ENCODE measurements at regions of chr1 and their contacts with region 1.

Region 1: GRCh38 chr1:100459358-100460114 is 78.4 kb upstream of the GPR88 start:
- DNase-seq: peak; percentile 69
- H3K4me3 ChIP-seq: no peak overlapping the region
- H3K27ac ChIP-seq: no peak overlapping the region
- H3K4me1 ChIP-seq: peaks cover 7% of the 10 kb centered on the region
- H3K27me3 ChIP-seq: no peaks in the 10 kb centered on the region
- CTCF ChIP-seq: peak; percentile 93

Region 2: DNA sequence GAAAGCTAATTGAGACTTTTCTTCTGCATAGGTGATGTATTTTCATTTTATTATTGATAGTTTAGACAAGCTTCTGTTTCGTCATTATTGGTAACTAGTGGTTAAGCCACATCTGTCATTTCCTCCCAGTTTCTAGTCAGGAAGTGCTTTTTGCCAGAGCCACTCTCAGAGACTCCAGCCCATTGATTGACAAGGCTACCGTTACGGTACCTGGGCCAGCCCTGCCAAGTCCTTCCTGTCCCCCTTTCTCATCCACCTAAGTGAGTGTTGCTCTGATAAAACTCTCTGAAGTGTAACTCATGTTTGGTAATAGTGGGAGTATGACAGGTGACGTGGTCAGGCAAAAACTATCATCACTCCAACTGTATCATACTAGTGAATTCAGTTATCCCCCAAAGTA is 639.0 kb before region 1 on chr1:
- intact Hi-C with region 1: loop called (anchors 10 kb)
- DNase-seq: no peak
- H3K4me3 ChIP-seq: no peak overlapping the region
- H3K27ac ChIP-seq: no peak overlapping the region
- H3K4me1 ChIP-seq: peaks cover 5% of the 10 kb centered on the region
- H3K27me3 ChIP-seq: no peaks in the 10 kb centered on the region
- CTCF ChIP-seq: no peak

Region 3: GRCh38 chr1:100866041-100866900 is 406.7 kb after region 1 on chr1:
- intact Hi-C with region 1: loop called (anchors 2 kb)
- DNase-seq: no peak
- H3K4me3 ChIP-seq: no peak overlapping the region
- H3K27ac ChIP-seq: no peak overlapping the region
- H3K4me1 ChIP-seq: peaks cover 8% of the 10 kb centered on the region
- H3K27me3 ChIP-seq: no peaks in the 10 kb centered on the region
- CTCF ChIP-seq: peak; percentile 76

Region 4: GRCh38 chr1:100912019-100912418 is 452.5 kb after region 1 on chr1:
- intact Hi-C with region 1: no loop called
- DNase-seq: no peak
- H3K4me3 ChIP-seq: no peak overlapping the region
- H3K27ac ChIP-seq: no peak overlapping the region
- H3K4me1 ChIP-seq: no peaks in the 10 kb centered on the region
- H3K27me3 ChIP-seq: no peaks in the 10 kb centered on the region
- CTCF ChIP-seq: no peak